Mammary epithelial cell (primary cell): ENCODE measurements at regions of chr21 and their contacts with region 1.

Region 1: DNA sequence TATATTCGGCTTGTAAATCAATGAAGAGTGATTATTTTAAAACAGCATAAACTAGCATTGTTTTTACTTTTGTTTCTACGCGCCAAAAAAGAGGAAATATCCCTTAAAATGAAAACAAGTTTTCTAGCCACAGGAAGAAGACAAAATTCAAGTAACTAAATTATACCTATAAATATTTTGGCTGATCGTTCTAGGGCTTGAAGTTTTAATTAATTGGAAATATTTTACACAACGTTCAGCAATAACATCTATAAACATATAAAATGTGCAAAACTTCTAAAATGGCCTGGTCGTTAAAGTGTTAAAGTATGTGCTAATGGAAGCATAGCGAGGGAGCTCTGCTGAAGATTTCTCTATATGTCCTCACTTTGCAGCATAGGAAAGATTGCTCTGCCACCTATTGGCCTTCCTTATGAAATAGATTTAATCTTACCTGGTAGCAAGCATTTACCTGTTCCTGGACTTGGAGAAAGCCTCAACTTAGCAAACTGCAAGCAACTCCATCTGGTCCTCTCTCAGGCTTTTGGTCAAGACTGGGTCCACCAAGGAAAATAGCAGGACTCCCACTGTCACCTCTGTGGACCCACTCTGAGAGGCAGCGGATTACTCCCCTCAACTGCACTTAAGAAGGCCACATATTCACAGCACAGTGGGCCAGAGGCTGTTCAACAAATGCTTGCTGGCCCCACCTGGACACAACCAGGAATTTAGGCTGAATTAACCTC is 351.3 kb upstream of the RUNX1 start:
- DNase-seq: peak; percentile 81
- H3K4me3 ChIP-seq: peak overlapping the region in 1 of 3 experiments; percentile 30
- H3K27ac ChIP-seq: peak overlapping the region; percentile 80
- H3K4me1 ChIP-seq: peaks cover 36% of the 10 kb centered on the region
- H3K27me3 ChIP-seq: no peaks in the 10 kb centered on the region
- CTCF ChIP-seq: peak; percentile 57 to 69

Region 2: DNA sequence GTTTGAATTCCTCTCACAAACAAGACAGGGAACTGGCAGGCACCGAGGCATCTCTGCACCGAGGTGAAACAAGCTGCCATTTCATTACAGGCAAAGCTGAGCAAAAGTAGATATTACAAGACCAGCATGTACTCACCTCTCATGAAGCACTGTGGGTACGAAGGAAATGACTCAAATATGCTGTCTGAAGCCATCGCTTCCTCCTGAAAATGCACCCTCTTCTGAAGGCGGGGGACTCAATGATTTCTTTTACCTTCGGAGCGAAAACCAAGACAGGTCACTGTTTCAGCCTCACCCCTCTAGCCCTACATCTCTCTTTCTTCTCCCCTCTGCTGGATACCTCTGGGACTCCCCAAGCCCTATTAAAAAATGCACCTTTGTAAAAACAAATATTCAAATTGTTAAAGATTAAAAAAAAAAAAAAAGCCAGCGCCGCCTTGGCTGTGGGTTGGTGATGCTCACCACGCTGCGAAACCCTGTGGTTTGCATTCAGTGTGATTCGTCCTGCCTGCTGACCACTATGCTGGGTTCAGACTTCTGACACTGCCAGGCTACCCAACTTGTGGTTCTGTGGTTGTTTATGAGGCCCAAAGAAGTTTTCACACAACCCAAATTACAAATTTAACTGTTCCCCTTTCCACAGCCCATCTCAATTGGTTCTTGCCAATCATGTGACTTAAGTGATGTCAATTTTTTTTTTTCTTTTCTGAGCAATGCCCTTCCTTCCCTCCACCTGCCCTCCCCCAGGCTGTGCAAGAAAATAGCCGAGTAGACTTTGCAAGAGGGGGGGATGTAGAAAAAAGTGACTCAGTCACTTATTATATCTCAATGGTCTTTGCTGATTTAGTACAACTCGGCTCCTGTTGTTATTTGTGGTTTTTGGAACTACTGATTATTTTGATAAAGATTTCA is 351.4 kb before region 1 on chr21 and contains the start of gene RUNX1:
- CTCF ChIA-PET with region 1: no interaction called
- dilution Hi-C with region 1: no loop called
- in situ Hi-C with region 1: no loop called
- intact Hi-C with region 1: loop called (anchors 1 kb)
- DNase-seq: peak; percentile 91
- H3K4me3 ChIP-seq: peak within 1 kb of the TSS; percentile 13 to 35 (median 34)
- H3K27ac ChIP-seq: peak within 1 kb of the TSS; percentile 90
- H3K4me1 ChIP-seq: peaks cover 32% of the 10 kb centered on the region
- H3K27me3 ChIP-seq: no peaks in the 10 kb centered on the region
- CTCF ChIP-seq: no peak
- total RNA-seq, gene RUNX1: 126 to 133 TPM

Region 3: DNA sequence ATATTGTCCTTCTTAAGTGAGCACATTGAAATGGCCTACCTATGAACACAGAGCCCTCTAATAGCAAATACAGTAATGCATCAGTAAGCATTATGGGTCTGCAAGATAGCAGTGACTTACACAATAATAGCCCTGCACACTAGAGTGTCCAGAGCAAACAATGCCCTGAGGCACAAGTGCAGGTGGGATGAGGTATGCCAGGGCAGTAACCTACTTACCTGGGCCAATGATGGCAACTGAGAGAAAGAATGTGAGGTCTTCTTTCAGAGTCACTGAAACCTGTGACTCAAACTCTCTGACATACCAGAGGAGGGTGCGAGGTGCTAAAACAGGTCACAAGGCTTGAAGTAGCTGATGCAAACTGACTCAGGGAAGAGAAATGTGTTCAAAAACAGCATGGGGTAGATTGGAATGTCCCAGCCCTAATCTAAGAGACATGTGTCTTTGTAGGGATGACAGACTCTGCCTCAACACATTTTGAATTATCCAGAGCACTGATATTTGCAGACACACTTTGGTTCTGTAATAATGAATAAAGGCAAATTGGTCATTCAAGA is 182.8 kb before region 1 on chr21:
- CTCF ChIA-PET with region 1: no interaction called
- dilution Hi-C with region 1: no loop called
- in situ Hi-C with region 1: no loop called
- intact Hi-C with region 1: loop called (anchors 1 kb)
- DNase-seq: peak; percentile 100
- H3K4me3 ChIP-seq: no peak overlapping the region
- H3K27ac ChIP-seq: peak overlapping the region; percentile 98
- H3K4me1 ChIP-seq: peaks cover 28% of the 10 kb centered on the region
- H3K27me3 ChIP-seq: no peaks in the 10 kb centered on the region
- CTCF ChIP-seq: no peak

Region 4: DNA sequence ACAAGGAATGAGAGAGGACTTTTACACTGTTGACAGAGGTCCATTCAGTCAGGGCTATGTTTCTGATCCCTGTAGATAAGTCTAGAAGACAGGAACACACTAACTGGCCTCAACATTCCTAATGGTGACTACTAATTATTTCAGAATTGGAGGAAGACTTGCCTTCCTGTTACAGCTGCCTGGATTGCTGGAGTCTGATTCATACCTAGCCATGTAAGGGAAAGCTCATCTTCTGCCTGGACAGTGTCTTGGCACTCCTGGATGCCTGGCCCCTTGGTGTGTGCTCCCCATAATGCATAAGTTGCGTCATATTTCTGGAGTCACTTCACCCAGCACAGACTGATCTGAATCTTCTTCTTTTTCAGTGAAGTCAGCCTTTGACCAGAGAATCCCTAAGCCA is 25.3 kb before region 1 on chr21:
- CTCF ChIA-PET with region 1: no interaction called
- dilution Hi-C with region 1: no loop called
- in situ Hi-C with region 1: no loop called
- intact Hi-C with region 1: loop called (anchors 2 kb)
- DNase-seq: peak; percentile 77
- H3K4me3 ChIP-seq: no peak overlapping the region
- H3K27ac ChIP-seq: peak overlapping the region; percentile 42
- H3K4me1 ChIP-seq: peaks cover 37% of the 10 kb centered on the region
- H3K27me3 ChIP-seq: no peaks in the 10 kb centered on the region
- CTCF ChIP-seq: no peak

Region 5: DNA sequence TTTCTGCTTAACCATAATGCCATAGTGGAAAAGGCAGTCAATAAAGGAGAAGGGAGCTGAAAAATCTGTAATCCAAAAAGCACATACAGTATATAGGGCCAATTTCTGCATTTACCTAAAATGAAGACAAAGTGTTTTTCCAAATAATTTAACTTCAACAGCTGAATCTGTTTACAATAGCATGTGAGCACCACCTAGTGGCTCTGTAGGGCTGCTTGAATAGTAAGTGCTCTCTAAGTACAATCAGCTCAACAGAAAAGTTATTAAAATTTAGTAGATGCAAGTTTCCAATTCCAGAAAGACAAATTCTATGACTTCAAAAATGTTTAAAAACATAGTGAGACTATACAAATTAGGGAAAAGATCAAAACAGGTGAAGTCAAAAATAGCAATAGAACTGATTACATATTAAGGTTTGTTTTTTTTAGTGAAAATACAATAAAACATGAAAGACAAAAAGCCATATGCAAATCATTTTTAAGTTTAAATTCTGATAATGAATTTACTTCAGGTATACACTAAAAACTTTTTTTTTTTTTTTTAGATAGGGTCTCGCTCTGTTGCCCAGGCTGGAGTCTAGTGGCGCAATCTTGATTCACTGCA is 439.9 kb after region 1 on chr21:
- CTCF ChIA-PET with region 1: interaction called, 5 read pairs
- dilution Hi-C with region 1: loop called (anchors 25 kb)
- in situ Hi-C with region 1: loop called in 1 of 2 experiments (anchors 10 kb)
- intact Hi-C with region 1: loop called (anchors 2 kb)
- DNase-seq: peak; percentile 59
- H3K4me3 ChIP-seq: no peak overlapping the region
- H3K27ac ChIP-seq: no peak overlapping the region
- H3K4me1 ChIP-seq: peaks cover 2% of the 10 kb centered on the region
- H3K27me3 ChIP-seq: no peaks in the 10 kb centered on the region
- CTCF ChIP-seq: peak; percentile 85 to 92

Region 6: DNA sequence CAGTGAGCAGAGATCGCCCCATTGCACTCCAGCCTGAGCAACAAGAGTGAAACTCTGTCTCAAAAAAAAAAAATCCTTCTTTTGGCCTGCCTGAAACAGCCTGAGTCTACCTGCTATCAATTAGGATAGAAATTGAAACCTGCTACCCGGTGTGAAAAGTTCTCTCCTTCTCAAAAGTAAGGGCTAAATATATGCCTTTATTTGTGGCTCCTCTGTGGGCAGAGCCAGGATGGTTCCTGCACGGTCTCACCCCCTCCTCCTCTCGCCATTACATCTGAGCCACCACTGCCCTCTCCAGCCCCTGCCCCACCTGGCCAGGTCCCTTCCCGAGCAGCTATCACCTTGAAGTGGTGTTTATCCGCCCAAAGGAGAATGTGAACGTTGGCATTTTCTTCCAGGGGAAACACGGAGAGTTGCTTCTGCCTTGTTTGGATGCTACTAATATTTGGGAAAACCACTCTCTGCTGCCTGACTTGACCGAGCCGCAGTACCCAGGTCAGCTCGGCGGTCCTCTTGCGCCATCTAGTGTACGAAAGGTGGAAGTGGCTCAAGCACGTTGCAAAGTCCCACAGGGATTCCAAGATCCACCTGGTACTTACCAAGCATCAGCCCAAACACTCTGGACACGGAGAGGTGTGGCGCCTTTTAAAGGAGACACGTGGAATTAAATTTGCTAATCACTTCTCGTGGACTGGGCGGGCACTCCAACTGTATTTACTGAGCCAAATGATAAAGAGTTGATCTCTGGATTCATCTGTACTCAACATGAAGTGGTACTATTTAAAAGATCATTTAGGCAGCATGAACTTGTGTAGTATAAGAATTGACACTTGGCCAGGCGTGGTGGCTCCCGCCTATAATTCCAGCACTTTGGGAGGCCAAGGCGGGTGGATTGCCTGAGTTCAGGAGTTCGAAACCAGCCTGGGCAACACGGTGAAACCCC is 628.0 kb after region 1 on chr21:
- CTCF ChIA-PET with region 1: no interaction called
- dilution Hi-C with region 1: no loop called
- in situ Hi-C with region 1: loop called in 1 of 2 experiments (anchors 10 kb)
- intact Hi-C with region 1: loop called (anchors 5 kb)
- DNase-seq: peak; percentile 70
- H3K4me3 ChIP-seq: no peak overlapping the region
- H3K27ac ChIP-seq: no peak overlapping the region
- H3K4me1 ChIP-seq: peaks cover 11% of the 10 kb centered on the region
- H3K27me3 ChIP-seq: no peaks in the 10 kb centered on the region
- CTCF ChIP-seq: peak; percentile 96 to 97